Right ventricle myocardium inferior (tissue), 1 donor: ENCODE measurements at regions of chr22 and their contacts with region 1.

Region 1: DNA sequence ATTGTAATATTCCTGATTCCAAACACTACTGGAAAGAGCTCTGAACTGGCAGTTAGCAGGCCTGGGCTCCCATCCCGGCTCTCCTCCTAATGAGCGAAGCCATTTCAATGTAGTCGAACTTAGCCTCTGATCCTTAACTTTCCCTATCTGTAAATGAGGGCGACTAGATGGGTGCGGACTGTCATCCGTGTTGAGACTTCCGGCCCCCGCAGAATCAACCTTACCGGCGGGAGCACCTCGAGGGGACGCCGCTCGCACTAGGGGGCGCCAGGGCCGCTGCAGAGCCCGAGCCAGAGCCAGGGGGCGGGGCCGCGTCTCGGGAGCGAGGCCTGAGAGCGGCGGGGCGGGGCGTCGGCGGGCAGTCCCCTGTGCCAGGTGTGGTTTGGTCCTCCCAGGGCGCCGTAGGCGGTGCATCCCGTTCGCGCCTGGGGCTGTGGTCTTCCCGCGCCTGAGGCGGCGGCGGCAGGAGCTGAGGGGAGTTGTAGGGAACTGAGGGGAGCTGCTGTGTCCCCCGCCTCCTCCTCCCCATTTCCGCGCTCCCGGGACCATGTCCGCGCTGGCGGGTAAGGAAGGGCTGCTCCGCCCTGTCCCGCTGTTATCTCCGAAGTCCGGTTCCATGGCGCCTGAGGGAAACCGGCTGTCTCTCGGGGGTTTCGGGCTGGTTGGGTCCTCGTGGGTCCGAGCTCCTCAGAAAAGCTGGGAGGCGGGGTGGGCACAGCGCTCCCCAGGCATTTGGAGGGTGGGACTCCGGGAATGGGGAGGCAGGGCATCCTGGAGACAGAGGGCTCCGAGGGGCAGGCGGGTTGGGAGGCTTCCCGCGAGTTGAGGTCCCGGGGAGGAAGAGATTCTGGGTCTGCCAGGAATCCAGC is at the start of gene LIMK2:
- DNase-seq: peak; percentile 98
- ATAC-seq: peak; percentile 95
- total RNA-seq, gene LIMK2: 11.6 TPM

Region 2: GRCh38 chr22:31253949-31254348 is 41.9 kb after region 1 on chr22:
- intact Hi-C with region 1: loop called (anchors 5 kb)
- DNase-seq: no peak
- ATAC-seq: no peak

Region 3: DNA sequence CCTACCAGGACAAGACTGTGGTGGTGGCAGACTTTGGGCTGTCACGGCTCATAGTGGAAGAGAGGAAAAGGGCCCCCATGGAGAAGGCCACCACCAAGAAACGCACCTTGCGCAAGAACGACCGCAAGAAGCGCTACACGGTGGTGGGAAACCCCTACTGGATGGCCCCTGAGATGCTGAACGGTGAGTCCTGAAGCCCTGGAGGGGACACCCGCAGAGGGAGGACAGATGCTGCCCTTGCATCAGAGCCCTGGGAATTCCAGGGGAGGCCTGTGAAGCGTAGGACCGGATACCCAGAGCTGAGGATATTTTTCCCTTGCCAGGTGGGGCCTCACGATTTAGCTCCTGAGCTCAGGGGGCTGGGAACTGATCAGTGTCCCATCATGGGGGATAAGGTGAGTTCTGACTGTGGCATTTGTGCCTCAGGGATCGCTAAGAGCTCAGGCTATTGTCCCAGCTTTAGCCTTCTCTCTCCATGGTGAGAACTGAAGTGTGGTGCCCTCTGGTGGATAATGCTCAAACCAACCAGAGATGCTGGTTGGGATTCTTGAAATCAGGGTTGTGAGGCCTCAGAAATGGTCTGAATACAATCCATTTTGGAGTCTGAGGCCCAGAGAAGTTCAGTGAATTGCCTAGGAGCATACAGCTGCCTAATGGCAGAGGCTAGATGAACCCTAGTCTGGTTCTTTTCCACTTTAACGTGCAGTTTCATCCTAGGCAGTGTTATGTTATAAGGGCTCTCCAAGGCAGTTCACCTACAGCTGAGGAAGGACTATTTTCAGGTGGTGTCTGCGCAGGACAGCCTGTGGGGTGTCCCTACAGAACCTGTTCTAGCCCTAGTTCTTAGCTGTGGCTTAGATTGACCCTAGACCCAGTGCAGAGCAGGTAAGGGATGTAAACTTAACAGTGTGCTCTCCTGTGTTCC is 60.7 kb after region 1 on chr22:
- intact Hi-C with region 1: loop called (anchors 5 kb)
- DNase-seq: no peak
- ATAC-seq: peak; percentile 67

Region 4: DNA sequence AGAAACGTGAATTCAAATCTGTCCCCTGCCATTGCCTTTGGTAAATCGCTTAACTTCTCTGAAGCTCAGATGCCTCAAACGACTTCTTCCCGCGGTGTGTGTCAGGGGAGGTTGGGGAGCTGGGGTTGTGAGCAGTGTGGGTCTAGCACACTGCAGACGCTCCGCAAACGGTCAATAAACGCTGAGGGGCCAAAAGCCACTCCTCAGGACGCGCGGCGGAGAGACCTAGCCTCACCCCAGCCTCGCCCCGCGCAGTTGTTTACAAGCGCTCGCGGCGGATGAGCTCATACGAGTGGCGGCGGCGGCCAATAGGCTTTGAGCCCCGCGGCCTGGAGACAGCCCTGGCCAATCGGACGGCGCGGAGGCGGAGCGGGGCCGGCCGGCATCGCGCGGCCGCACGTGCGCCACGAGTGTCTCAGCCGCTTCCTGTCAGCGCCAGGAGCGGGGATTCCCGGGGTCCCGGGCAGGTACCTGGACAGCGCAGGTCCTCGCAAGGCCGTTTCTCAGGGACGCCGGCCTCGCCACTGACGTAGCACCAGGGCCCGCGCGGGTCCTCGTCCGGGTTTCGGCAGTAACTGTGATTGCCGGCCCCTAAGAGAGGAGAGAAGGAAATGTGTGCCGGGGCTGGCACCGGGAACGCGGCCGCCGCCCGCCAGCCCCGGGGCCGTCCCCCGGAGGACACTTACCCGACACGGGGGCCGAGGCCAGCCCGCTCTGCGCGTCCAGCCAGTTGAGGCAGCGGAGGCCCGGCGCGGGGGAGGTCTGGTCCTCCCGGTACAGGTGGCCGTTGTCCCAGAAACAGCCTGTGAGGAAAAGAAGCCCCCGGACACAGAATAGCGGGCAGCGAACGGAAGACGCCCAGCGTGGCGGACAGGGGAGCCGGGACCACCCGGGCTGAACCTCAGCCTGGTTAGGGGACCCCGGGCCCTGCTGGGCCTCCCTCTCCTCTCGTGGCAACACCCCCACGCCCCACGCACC is 78.7 kb after region 1 on chr22:
- intact Hi-C with region 1: loop called (anchors 5 kb)
- DNase-seq: peak; percentile 99
- ATAC-seq: peak; percentile 94